ENCODE measurements at regions of chr2 and their contacts with region 1.

Region 1: DNA sequence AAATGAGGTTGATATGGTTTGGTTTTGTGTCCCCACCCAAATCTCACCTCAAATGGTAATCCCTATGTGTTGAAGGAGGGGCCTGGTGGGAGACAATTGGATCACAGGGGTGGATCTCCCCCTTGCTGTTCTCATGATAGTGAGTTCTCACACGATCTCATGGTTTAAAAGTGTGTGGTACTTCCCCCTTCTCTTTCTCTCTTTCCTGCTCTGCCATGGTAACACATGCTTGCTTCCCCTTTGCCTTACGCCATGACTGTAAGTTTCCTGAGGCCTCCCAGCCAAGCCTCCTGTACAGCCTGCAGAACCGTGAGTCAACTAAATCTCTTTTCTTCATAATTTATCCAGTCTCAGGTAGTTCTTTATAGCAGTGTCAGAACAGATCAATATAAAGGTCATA is 24.7 kb upstream of the FAM124B start:
- DNase-seq: no peak
- H3K4me3 ChIP-seq: no peak overlapping the region
- H3K27ac ChIP-seq: no peak overlapping the region
- H3K4me1 ChIP-seq: no peaks in the 10 kb centered on the region
- H3K27me3 ChIP-seq: no peaks in the 10 kb centered on the region
- CTCF ChIP-seq: no peak
- POLR2A ChIP-seq: no peak

Region 2: GRCh38 chr2:224381521-224382279 is 45.0 kb before region 1 on chr2:
- intact Hi-C with region 1: loop called (anchors 2 kb)
- DNase-seq: no peak
- H3K4me3 ChIP-seq: no peak overlapping the region
- H3K27ac ChIP-seq: no peak overlapping the region
- H3K4me1 ChIP-seq: no peaks in the 10 kb centered on the region
- H3K27me3 ChIP-seq: no peaks in the 10 kb centered on the region
- CTCF ChIP-seq: no peak
- POLR2A ChIP-seq: no peak

Measured in breast epithelium (tissue), 4 donors.